GM10248 (cell line): ENCODE measurements at regions of chr6 and their contacts with region 1.

Region 1: DNA sequence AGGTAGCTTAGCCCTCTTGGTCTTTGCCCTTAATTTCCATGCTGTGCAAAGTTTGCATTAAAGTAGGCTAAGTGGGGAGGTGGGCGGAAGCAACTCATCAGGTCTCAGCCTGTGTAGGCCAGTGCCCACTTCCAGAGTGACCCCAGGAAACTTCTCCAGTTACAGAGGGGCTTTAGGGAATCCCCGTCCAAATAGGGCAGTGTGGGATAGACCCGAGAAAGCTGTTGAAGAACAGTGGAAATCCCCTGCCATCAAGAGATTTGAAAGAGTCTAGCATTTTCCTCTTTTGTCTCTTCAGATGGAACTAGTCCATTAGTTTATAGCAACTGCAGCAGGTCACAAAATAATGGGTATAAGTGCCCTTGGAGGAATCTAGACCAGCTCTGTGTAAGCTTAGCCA is 20.2 kb downstream of the SF3B5 start:
- DNase-seq: peak; percentile 24
- CTCF ChIP-seq: no peak

Region 2: GRCh38 chr6:144087789-144088426 is 12.7 kb after region 1 on chr6:
- CTCF ChIA-PET with region 1: interaction called, 12 read pairs
- POLR2A ChIA-PET with region 1: no interaction called
- DNase-seq: no peak
- CTCF ChIP-seq: peak; percentile 50